ENCODE measurements at regions of chr1 and their contacts with region 1.

Region 1: GRCh38 chr1:162023547-162024501 is at the start of gene OLFML2B:
- DNase-seq: peak; percentile 58
- ATAC-seq: peak; percentile 90
- H3K4me3 Mint-ChIP-seq: peak within 1 kb of the TSS; percentile 79
- H3K27ac Mint-ChIP-seq: no peak within 1 kb of the TSS
- H3K4me1 Mint-ChIP-seq: peaks cover 6% of the 10 kb centered on the region
- H3K27me3 Mint-ChIP-seq: peaks cover 36% of the 10 kb centered on the region
- CTCF ChIP-seq: no peak
- total RNA-seq, gene OLFML2B: not detected

Region 2: DNA sequence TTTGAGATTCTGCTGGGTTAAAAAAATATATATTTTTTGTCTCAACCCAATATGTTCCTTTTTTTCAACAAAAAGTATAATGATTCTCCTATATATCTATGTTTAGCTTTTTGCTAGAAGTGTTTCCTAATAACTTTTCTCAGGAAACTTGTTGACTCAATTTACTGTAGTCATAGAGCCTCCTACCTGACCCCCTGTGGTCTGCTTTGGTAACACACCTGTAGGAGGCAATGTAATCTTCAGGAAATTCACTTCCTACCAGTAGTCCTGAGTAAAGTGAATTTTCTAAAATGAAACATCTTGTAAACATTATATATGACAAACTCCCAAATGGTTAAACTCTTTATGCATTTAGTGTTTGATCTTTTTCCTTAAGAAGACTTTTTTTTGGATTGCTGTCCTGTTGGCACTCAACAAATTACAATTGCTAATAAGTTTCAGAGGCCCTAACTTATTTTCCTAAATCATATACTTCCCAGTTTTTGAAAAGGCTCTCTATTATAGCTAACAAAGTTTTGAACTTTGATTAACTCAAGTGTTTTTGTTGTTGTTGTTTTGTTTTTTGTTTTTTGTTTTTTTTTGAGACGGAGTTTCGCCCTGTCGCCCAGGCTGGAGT is 118.4 kb before region 1 on chr1:
- CTCF ChIA-PET with region 1: interaction called, 10 read pairs
- POLR2A ChIA-PET with region 1: no interaction called
- intact Hi-C with region 1: no loop called
- DNase-seq: peak; percentile 42
- ATAC-seq: peak; percentile 73
- H3K4me3 Mint-ChIP-seq: no peak overlapping the region
- H3K27ac Mint-ChIP-seq: no peak overlapping the region
- H3K4me1 Mint-ChIP-seq: peaks cover 18% of the 10 kb centered on the region
- H3K27me3 Mint-ChIP-seq: no peaks in the 10 kb centered on the region
- CTCF ChIP-seq: peak; percentile 83

Region 3: DNA sequence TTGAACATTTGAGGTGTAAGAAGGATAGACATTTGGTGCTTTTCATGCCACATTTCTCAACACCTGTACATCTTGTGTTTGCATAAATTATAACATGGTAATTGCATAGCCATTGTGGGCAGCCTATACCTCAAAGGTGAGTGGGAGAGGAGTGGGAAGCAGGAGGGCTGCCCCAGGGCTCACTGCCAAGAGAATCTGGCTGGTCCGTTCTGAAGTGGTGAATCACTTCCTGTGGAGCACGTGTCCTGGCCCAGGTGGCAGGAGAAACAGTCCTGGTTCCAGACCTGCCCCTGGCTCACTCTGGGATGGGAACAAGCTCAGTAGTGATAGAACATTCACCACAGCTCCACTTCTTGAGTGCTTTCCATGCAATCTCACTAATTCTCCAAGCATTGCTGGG is 11.4 kb after region 1 on chr1:
- CTCF ChIA-PET with region 1: interaction called, 11 read pairs
- POLR2A ChIA-PET with region 1: interaction called, 4 read pairs
- intact Hi-C with region 1: no loop called
- DNase-seq: peak; percentile 25
- ATAC-seq: peak; percentile 34
- H3K4me3 Mint-ChIP-seq: no peak overlapping the region
- H3K27ac Mint-ChIP-seq: no peak overlapping the region
- H3K4me1 Mint-ChIP-seq: peaks cover 6% of the 10 kb centered on the region
- H3K27me3 Mint-ChIP-seq: peaks cover 10% of the 10 kb centered on the region
- CTCF ChIP-seq: no peak